ENCODE measurements at regions of chr9 and their contacts with region 1.

Region 1: GRCh38 chr9:113578882-113579282 is 115.4 kb downstream of the RGS3 start:
- DNase-seq: no peak
- H3K4me3 ChIP-seq: no peak overlapping the region
- H3K27ac ChIP-seq: no peak overlapping the region
- H3K4me1 ChIP-seq: peaks cover 10% of the 10 kb centered on the region
- H3K27me3 ChIP-seq: no peaks in the 10 kb centered on the region
- CTCF ChIP-seq: no peak
- EP300 ChIP-seq: no peak
- POLR2A ChIP-seq: no peak

Region 2: DNA sequence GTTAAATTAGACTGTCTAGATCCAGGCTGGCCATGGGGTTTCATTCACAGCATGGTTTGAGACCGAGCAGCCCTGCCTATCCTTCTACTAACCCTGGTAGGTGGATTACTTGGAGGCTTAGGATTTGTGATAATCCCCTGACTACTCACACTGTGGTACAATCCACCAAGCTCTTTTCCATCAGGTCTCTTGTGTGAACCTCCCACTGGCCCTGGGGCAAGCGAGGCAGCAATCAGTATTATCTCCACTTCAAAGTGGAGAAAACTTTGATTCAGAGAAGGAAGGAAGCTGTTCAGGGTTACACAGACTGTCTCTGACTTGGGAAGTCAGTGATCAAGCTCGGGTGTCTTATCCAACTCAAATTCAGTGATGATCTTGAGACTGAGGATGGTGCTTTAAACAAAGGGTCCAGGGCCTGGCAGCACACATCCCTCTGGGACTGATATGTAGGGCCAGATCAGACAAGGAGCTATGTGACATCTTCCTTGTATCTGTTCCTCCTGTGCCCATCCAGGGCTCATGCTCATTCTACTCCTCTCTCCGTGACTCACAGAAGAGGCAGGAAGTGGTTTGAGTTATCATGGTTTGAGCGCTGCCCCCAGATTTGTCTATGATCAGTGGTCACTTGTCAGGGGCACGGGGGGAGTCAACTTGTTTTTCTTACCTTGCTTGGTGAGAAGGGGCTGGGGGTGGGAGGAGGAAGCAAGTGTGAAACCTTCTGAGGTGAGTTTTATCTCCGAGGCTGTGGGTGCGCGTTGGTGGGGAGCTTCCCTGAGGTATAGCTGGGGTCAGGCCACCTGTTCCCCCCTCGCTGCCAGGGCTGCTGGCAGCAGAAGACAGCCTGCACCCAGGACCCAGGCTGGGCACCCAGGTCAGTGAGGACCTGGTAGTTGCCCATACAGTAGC is 66.8 kb before region 1 on chr9:
- intact Hi-C with region 1: loop called in 1 of 4 experiments (anchors 10 kb)
- DNase-seq: no peak
- H3K4me3 ChIP-seq: no peak overlapping the region
- H3K27ac ChIP-seq: no peak overlapping the region
- H3K4me1 ChIP-seq: peaks cover 3% of the 10 kb centered on the region
- H3K27me3 ChIP-seq: no peaks in the 10 kb centered on the region
- CTCF ChIP-seq: no peak
- EP300 ChIP-seq: no peak
- POLR2A ChIP-seq: no peak

Region 3: GRCh38 chr9:113756476-113757192 is 177.8 kb after region 1 on chr9:
- intact Hi-C with region 1: no loop called
- DNase-seq: no peak
- H3K4me3 ChIP-seq: no peak overlapping the region
- H3K27ac ChIP-seq: no peak overlapping the region
- H3K4me1 ChIP-seq: peaks cover 3% of the 10 kb centered on the region
- H3K27me3 ChIP-seq: no peaks in the 10 kb centered on the region
- CTCF ChIP-seq: no peak
- EP300 ChIP-seq: no peak
- POLR2A ChIP-seq: no peak

Region 4: GRCh38 chr9:114033397-114034103 is 454.7 kb after region 1 on chr9:
- intact Hi-C with region 1: no loop called
- DNase-seq: peak in 4 of 5 donors; percentile 15 to 62 (median 47)
- H3K4me3 ChIP-seq: no peak overlapping the region
- H3K27ac ChIP-seq: no peak overlapping the region
- H3K4me1 ChIP-seq: peaks cover 3% of the 10 kb centered on the region
- H3K27me3 ChIP-seq: no peaks in the 10 kb centered on the region
- CTCF ChIP-seq: peak in 1 of 3 donors; percentile 41
- EP300 ChIP-seq: no peak
- POLR2A ChIP-seq: no peak

Measured in ovary (tissue), 10 donors.